ENCODE measurements at regions of chr13 and their contacts with region 1.

Region 1: GRCh38 chr13:46721054-46721453 is 75.9 kb downstream of the ESD start:
- DNase-seq: peak; percentile 53
- H3K4me3 ChIP-seq: no peak overlapping the region
- H3K27ac ChIP-seq: peak overlapping the region in 1 of 2 experiments; percentile 19; a peak in 2 of 4 replicates
- H3K4me1 ChIP-seq: peaks cover 4 to 18% of the 10 kb centered on the region in 2 experiments; a peak in 3 of 4 replicates
- H3K27me3 ChIP-seq: no peaks in the 10 kb centered on the region
- CTCF ChIP-seq: peak; percentile 82
- EP300 ChIP-seq: peak in 1 of 2 experiments; percentile 65; a peak in 2 of 4 replicates
- RAD21 ChIP-seq: peak; percentile 90

Region 2: DNA sequence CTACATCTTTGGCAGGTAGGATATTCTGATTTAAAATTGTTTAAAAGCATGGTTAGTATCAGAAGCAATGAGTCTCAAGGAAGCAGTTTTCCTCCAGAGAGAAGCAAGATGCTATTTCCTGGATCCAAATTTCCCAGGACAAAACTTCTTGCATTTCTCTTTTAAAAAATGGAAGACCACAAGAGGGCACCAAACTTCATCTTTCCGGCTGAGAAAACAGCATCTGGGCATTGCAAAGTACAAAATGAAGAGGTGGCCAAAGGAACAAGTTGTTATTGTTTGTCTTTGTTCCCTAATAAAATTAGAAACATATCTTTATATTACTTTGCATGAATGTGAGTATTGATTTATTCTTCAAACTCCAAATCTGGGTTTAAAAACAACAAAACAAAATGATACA is 228.1 kb before region 1 on chr13:
- CTCF ChIA-PET with region 1: interaction called, 40 read pairs
- POLR2A ChIA-PET with region 1: no interaction called
- DNase-seq: peak; percentile 46
- H3K4me3 ChIP-seq: no peak overlapping the region
- H3K27ac ChIP-seq: no peak overlapping the region
- H3K4me1 ChIP-seq: peaks cover 10 to 15% of the 10 kb centered on the region in 2 experiments; a peak in 3 of 4 replicates
- H3K27me3 ChIP-seq: no peaks in the 10 kb centered on the region
- CTCF ChIP-seq: peak; percentile 78
- EP300 ChIP-seq: no peak
- RAD21 ChIP-seq: peak; percentile 94

Region 3: GRCh38 chr13:46498650-46499049 is 222.4 kb before region 1 on chr13:
- CTCF ChIA-PET with region 1: interaction called, 40 read pairs
- POLR2A ChIA-PET with region 1: no interaction called
- DNase-seq: no peak
- H3K4me3 ChIP-seq: no peak overlapping the region
- H3K27ac ChIP-seq: no peak overlapping the region
- H3K4me1 ChIP-seq: no peaks in the 10 kb centered on the region
- H3K27me3 ChIP-seq: no peaks in the 10 kb centered on the region
- CTCF ChIP-seq: no peak
- EP300 ChIP-seq: no peak
- RAD21 ChIP-seq: no peak

Region 4: DNA sequence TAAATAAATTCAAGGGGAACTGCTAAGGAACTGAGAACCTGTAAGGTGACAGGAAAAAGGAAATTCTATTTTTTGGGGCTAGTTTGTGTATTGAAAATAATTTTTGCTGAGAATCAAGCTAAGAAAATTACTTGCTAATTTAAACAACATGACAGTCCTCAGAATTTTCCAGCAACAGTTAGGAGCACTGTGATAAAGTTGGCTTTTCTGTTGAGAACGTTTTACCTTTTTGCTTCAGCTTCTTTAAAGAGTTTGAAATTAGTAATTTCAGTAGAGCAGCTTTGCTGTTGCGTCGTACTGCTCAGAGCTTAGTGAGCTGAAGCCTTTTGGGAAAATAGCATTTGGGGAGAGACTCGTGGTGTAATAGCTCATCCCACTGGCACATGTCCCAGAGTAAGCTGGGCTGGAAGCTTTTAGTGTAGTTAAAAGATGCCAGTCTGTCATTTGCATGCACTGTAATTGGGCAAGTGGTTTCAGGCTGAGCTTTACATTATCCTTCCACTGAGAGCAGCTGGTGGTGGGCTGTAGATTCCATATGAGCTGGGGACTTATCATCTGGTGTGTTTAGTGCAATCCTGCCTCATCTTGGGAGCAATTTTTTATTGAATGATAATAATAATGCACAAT is 98.3 kb before region 1 on chr13:
- CTCF ChIA-PET with region 1: interaction called, 11 read pairs
- POLR2A ChIA-PET with region 1: no interaction called
- DNase-seq: peak; percentile 71
- H3K4me3 ChIP-seq: no peak overlapping the region; a peak in 1 of 4 replicates
- H3K27ac ChIP-seq: peak overlapping the region; percentile 63 to 97
- H3K4me1 ChIP-seq: peaks cover 28 to 37% of the 10 kb centered on the region in 2 experiments; a peak in 3 of 4 replicates
- H3K27me3 ChIP-seq: no peaks in the 10 kb centered on the region
- CTCF ChIP-seq: no peak
- EP300 ChIP-seq: peak in 1 of 2 experiments; percentile 90; a peak in 2 of 4 replicates
- RAD21 ChIP-seq: peak; percentile 43

Region 5: GRCh38 chr13:46630431-46631178 is 90.4 kb before region 1 on chr13:
- CTCF ChIA-PET with region 1: interaction called, 11 read pairs
- POLR2A ChIA-PET with region 1: no interaction called
- DNase-seq: peak; percentile 30
- H3K4me3 ChIP-seq: no peak overlapping the region
- H3K27ac ChIP-seq: peak overlapping the region; percentile 35 to 99; a peak in 3 of 4 replicates
- H3K4me1 ChIP-seq: peaks cover 29 to 36% of the 10 kb centered on the region in 2 experiments; a peak in 3 of 4 replicates
- H3K27me3 ChIP-seq: no peaks in the 10 kb centered on the region
- CTCF ChIP-seq: no peak
- EP300 ChIP-seq: peak in 1 of 2 experiments; percentile 85; a peak in 2 of 4 replicates
- RAD21 ChIP-seq: peak; percentile 18; the same call in 1 of the 2 replicates

Region 6: GRCh38 chr13:46687810-46688209 is 33.2 kb before region 1 on chr13:
- CTCF ChIA-PET with region 1: interaction called, 10 read pairs
- POLR2A ChIA-PET with region 1: no interaction called
- DNase-seq: no peak
- H3K4me3 ChIP-seq: no peak overlapping the region
- H3K27ac ChIP-seq: no peak overlapping the region
- H3K4me1 ChIP-seq: peaks cover 30 to 47% of the 10 kb centered on the region in 2 experiments; a peak in 3 of 4 replicates
- H3K27me3 ChIP-seq: no peaks in the 10 kb centered on the region
- CTCF ChIP-seq: no peak
- EP300 ChIP-seq: no peak
- RAD21 ChIP-seq: no peak

Region 7: GRCh38 chr13:46698910-46699460 is 22.1 kb before region 1 on chr13:
- CTCF ChIA-PET with region 1: interaction called, 13 read pairs
- POLR2A ChIA-PET with region 1: no interaction called
- DNase-seq: peak; percentile 19
- H3K4me3 ChIP-seq: no peak overlapping the region
- H3K27ac ChIP-seq: peak overlapping the region in 1 of 2 experiments; percentile 54; a peak in 2 of 4 replicates
- H3K4me1 ChIP-seq: peaks cover 0 to 18% of the 10 kb centered on the region in 2 experiments; a peak in 2 of 4 replicates
- H3K27me3 ChIP-seq: no peaks in the 10 kb centered on the region
- CTCF ChIP-seq: no peak
- EP300 ChIP-seq: no peak
- RAD21 ChIP-seq: no peak